CD4-positive, alpha-beta T cell (primary cell): ENCODE measurements at regions of chrX and their contacts with region 1.

Region 1: GRCh38 chrX:49792376-49792775 is 36.7 kb upstream of the PAGE4 start:
- DNase-seq: no peak
- ATAC-seq: no peak
- H3K4me3 ChIP-seq: no peak overlapping the region
- H3K4me3 Mint-ChIP-seq: no peak overlapping the region
- H3K27ac ChIP-seq: no peak overlapping the region
- H3K27ac Mint-ChIP-seq: no peak overlapping the region
- H3K4me1 ChIP-seq: no peaks in the 10 kb centered on the region
- H3K4me1 Mint-ChIP-seq: no peaks in the 10 kb centered on the region
- H3K27me3 ChIP-seq: peaks cover 2 to 7% of the 10 kb centered on the region in 2 experiments
- H3K27me3 Mint-ChIP-seq: peaks cover 5% of the 10 kb centered on the region
- CTCF ChIP-seq: no peak

Region 2: DNA sequence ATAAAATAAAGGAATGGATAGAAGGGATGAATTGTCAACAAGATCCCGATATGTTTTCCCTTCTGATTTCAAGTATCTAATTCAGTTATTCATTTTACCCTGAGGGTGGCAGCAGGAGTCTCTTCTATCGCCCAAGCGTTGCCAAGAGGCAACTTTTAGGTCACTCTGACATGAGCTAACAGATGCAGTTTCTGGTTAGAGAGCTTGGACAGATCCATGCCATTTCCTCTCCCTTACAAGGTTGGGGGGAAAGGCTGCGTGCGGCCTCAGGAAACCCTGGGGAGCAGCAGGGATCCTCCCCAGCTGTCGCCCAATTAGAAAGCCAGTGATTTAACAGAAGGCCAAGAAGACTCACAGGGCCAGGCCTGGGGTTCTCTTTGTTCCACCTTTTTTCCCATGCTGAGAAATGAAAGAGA is 1144.0 kb before region 1 on chrX:
- CTCF ChIA-PET with region 1: no interaction called
- POLR2A ChIA-PET with region 1: no interaction called
- intact Hi-C with region 1: no loop called
- DNase-seq: peak; percentile 5 to 74 (median 21)
- ATAC-seq: peak; percentile 78
- H3K4me3 ChIP-seq: no peak overlapping the region
- H3K4me3 Mint-ChIP-seq: no peak overlapping the region
- H3K27ac ChIP-seq: no peak overlapping the region
- H3K27ac Mint-ChIP-seq: no peak overlapping the region
- H3K4me1 ChIP-seq: peaks cover 3% of the 10 kb centered on the region
- H3K4me1 Mint-ChIP-seq: peaks cover 7% of the 10 kb centered on the region
- H3K27me3 ChIP-seq: no peaks in the 10 kb centered on the region
- H3K27me3 Mint-ChIP-seq: no peaks in the 10 kb centered on the region
- CTCF ChIP-seq: peak; percentile 51

Region 3: DNA sequence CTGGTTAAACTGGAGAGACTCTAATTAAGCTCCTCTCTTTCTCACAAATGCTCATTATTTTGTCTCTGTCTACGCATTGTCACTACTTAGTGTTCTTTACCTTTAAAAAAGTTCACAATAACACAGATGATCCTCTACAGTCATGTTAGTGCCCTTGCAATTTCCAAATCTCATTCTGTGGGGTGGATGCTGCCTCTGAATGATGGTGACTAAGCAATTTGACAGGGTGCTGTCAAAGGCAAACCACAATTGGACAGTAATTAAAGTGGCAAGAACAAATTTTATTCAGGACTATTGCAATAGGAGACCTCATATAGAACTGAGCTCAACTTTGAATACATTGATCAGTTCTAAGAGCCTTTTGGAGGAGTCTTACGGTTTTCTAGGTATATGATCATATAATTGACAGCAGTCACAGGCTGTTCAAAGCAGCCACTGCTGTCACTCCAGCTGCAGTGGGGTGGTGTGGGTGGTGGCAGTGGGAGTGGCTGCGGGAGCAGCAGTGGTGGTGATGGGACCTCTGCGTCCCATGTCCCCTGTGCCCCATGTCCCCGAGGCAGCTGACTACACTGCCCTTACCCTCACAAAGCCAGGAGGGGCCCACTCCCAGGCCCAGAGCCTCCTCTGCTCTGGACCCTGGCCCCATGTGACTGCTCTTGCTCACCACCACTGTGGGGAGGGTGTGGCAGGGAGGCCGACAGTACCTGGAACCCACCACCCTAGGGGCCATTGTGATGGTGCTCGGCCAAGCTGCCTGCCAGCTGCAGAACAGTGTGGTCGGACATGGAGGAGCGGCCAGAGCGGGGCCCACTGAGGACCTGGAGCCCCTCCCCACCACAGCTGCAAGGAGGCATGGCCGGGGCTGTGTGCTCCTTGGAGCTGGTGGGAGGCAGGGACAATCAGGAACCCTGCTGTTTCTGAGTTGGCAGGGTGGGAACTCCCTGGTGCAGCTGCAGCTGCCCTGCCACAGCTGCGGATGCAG is 66.2 kb before region 1 on chrX:
- CTCF ChIA-PET with region 1: no interaction called
- POLR2A ChIA-PET with region 1: no interaction called
- intact Hi-C with region 1: loop called in 1 of 2 experiments (anchors 10 kb)
- DNase-seq: no peak
- ATAC-seq: no peak
- H3K4me3 ChIP-seq: no peak overlapping the region
- H3K4me3 Mint-ChIP-seq: no peak overlapping the region
- H3K27ac ChIP-seq: no peak overlapping the region
- H3K27ac Mint-ChIP-seq: no peak overlapping the region
- H3K4me1 ChIP-seq: no peaks in the 10 kb centered on the region
- H3K4me1 Mint-ChIP-seq: peaks cover 5% of the 10 kb centered on the region
- H3K27me3 ChIP-seq: no peaks in the 10 kb centered on the region
- H3K27me3 Mint-ChIP-seq: no peaks in the 10 kb centered on the region
- CTCF ChIP-seq: no peak